ENCODE measurements at regions of chr4 and their contacts with region 1.

Region 1: DNA sequence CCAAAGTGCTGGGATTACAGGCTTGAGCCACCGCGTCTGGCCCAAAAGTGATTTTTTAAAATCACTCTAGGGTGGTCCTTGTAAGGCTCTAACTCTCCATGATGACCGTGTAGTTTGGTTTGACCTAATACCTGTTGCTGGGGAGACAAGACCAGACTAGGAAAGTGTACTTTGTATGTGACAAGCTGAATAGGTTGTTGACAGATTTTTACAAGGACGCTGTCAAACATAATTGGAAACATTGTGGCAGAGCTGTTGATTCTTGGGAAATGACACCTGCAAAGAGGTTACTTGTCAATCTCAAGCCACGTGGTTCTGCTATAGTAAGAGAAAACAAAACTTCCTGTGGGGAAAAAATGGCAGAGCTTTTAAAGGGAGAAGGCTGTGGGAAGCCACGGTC is 802.4 kb upstream of the HS3ST1 start:
- DNase-seq: no peak
- H3K4me3 ChIP-seq: no peak overlapping the region
- H3K27ac ChIP-seq: no peak overlapping the region
- H3K27me3 ChIP-seq: no peaks in the 10 kb centered on the region
- CTCF ChIP-seq: no peak

Region 2: GRCh38 chr4:11860996-11861395 is 370.1 kb before region 1 on chr4:
- CTCF ChIA-PET with region 1: interaction called, 14 read pairs
- POLR2A ChIA-PET with region 1: no interaction called
- DNase-seq: no peak
- H3K4me3 ChIP-seq: no peak overlapping the region
- H3K27ac ChIP-seq: no peak overlapping the region
- H3K27me3 ChIP-seq: no peaks in the 10 kb centered on the region
- CTCF ChIP-seq: no peak

Measured in AG04450 (cell line).